ENCODE measurements at regions of chr16 and their contacts with region 1.

Region 1: DNA sequence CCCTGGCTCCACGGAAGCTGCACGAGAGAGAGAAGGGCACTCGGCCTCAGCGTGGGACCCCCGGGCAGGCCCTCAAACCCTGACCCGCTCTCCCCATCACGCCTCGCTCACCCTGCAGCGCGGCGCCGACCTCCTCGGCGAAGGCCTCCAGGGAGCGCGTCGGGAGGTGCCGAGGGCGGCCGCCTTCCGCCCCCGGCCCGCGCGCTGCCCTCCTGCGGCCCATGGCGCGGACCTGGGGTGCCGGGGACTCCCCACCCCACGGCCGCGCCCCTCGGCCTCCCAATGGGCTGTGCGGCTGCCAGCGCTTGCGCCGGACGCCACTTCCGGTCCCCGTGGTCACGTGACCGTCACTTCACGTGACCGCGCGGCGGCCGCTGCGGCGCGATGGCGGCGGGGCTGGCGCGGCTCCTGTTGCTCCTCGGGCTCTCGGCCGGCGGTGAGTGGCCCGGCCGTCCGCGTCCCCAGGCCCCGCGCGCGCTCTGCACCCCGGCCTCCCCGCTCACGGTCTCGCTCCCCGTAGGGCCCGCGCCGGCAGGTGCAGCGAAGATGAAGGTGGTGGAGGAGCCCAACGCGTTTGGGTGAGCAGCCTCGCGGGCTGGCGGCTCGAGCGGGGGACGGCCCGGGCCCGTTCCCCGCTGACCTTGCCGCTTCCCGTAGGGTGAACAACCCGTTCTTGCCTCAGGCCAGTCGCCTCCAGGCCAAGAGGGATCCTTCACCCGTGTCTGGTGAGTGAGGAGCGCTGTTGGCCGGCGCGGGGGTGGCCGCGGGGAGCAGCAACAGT is at the starts of genes GNPTG and TSR3:
- DNase-seq: peak; percentile 60 to 96 (median 69)

Region 2: GRCh38 chr16:1300664-1301476 is 50.9 kb before region 1 on chr16:
- intact Hi-C with region 1: loop called (anchors 5 kb)
- DNase-seq: peak in 9 of 10 donors; percentile 47 to 95 (median 67)

Region 3: GRCh38 chr16:1408171-1408837 is 56.5 kb after region 1 on chr16:
- intact Hi-C with region 1: no loop called
- DNase-seq: peak; percentile 90 to 99 (median 97)

Region 4: GRCh38 chr16:1420111-1420540 is 68.4 kb after region 1 on chr16:
- intact Hi-C with region 1: loop called (anchors 2 kb)
- DNase-seq: peak in 1 of 10 donors; percentile 87